ENCODE measurements at regions of chr6 and their contacts with region 1.

Region 1: DNA sequence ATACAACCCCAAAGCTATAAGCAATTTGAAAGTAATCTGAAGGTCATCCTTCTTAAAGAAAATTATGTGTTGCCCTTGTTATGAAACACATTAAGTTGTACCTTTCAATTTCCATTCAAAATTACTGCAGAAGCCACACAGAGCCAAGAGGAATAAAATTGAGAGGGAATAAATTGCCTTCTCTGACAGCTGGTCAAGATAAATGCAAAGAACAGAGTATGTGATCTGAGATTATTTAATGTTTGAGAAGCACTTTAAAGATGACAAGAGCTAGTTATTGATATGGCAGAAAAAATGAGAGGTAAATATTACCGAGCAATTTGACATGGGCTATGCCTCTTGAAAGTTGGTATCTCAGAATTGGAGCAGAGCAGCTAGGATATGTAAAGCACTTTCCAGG is 61.6 kb downstream of the TRDN start:
- DNase-seq: no peak
- H3K4me3 ChIP-seq: no peak overlapping the region
- H3K27ac ChIP-seq: no peak overlapping the region
- H3K4me1 ChIP-seq: no peaks in the 10 kb centered on the region
- H3K27me3 ChIP-seq: peaks cover 0 to 4% of the 10 kb centered on the region in 2 experiments
- CTCF ChIP-seq: no peak
- POLR2A ChIP-seq: no peak

Region 2: DNA sequence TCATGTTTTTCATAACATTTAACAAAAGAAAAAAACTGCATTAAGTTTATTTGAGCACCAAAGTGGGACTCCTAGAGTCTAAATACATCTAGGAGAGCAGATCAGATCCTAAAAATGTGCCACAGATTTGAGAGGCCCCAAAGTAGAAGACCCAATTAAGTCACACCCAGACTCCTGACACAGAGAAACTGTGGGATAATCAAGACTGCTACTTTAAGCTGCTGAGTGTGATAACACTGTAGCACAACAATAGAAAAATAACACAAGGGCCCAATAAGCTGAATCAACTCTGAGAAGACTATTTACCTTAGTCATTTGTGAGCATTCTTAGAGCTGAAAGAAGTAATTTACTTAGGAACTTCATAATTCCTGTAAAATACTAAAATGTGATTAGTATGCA is 35.6 kb after region 1 on chr6:
- CTCF ChIA-PET with region 1: no interaction called
- POLR2A ChIA-PET with region 1: no interaction called
- dilution Hi-C with region 1: no loop called
- intact Hi-C with region 1: loop called (anchors 5 kb)
- DNase-seq: no peak
- H3K4me3 ChIP-seq: no peak overlapping the region
- H3K27ac ChIP-seq: no peak overlapping the region
- H3K4me1 ChIP-seq: no peaks in the 10 kb centered on the region
- H3K27me3 ChIP-seq: no peaks in the 10 kb centered on the region
- CTCF ChIP-seq: no peak
- POLR2A ChIP-seq: no peak

Region 3: DNA sequence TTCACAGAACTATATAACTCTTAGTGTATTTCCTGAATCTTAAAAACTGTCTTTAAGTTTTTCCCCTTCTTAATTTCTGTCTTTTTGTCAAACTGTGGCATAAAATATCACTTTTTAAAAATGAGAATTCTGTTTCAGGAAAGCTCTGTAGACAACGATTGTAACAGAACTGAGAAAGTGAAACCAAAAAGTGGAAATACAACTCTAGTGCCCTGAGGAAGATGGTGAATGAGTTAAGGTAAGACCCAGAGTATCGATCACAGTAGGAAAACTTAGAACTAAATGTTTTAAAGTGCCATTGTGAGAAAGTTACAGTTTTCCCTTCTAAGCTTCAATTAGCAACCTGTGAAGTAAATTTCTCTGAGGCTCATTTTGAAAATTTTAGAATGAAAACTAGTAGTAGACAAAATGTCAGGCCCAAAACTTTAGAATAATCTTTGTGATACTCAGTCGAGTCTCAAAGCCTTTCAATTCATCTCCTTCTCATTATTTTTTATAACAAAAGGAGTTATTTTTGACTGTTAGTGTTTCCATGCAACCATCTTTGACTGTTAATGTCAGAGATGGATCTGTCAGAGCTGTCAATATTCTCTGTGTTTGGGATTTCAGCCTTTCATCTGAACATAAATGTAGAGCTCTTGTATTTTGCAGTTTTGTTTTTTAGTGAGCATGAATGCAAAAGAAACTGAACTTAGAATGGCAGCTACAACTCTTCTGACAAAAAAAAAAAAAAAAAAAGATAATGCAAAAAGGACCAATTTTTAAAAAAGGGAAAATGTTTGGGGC is 80.5 kb after region 1 on chr6:
- CTCF ChIA-PET with region 1: no interaction called
- POLR2A ChIA-PET with region 1: no interaction called
- dilution Hi-C with region 1: no loop called
- intact Hi-C with region 1: no loop called
- DNase-seq: peak; percentile 43
- H3K4me3 ChIP-seq: peak overlapping the region in 2 of 3 experiments; percentile 34 to 46
- H3K27ac ChIP-seq: peak overlapping the region; percentile 12
- H3K4me1 ChIP-seq: no peaks in the 10 kb centered on the region
- H3K27me3 ChIP-seq: no peaks in the 10 kb centered on the region
- CTCF ChIP-seq: no peak
- POLR2A ChIP-seq: no peak